ENCODE measurements at regions of chr3 and their contacts with region 1.

Region 1: DNA sequence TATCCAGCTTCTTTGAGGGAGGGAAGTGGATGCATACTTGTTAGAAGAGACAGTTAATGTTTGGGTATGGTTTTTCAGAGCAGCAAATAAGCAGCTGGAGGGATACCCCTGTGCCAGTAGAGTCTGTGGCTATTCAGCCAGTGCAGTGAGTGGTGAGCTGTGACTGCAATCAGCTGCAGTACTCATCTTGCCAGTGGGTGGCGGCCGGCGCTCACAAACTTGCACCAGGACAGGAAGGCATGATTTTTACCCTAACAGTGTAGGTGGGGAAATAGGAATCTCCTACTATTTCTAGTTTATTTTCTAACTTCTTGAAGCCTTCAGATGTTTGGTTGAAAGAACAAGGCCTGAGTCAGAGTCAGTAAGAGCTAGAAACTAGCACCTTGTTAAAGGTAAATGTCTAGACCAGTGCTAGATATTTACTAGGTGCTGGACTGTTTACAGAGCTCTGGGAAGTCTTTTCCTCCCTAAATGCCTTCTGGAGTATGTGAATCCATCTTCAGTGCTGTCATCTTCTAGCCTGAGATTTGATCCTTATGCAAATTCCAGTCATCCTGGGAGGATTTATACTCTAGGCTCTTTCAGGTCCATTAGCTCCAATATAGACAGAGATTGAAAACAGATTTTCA is 23.6 kb downstream of the TIMP4 start:
- DNase-seq: peak; percentile 57 to 63 (median 60)
- ATAC-seq: peak; percentile 97
- H3K4me3 ChIP-seq: no peak overlapping the region
- H3K27ac ChIP-seq: no peak overlapping the region
- H3K4me1 ChIP-seq: no peaks in the 10 kb centered on the region
- H3K27me3 ChIP-seq: no peaks in the 10 kb centered on the region
- CTCF ChIP-seq: peak; percentile 84 to 90 (median 88)
- EP300 ChIP-seq: no peak
- POLR2A ChIP-seq: no peak
- RAD21 ChIP-seq: peak; percentile 88 to 95

Region 2: DNA sequence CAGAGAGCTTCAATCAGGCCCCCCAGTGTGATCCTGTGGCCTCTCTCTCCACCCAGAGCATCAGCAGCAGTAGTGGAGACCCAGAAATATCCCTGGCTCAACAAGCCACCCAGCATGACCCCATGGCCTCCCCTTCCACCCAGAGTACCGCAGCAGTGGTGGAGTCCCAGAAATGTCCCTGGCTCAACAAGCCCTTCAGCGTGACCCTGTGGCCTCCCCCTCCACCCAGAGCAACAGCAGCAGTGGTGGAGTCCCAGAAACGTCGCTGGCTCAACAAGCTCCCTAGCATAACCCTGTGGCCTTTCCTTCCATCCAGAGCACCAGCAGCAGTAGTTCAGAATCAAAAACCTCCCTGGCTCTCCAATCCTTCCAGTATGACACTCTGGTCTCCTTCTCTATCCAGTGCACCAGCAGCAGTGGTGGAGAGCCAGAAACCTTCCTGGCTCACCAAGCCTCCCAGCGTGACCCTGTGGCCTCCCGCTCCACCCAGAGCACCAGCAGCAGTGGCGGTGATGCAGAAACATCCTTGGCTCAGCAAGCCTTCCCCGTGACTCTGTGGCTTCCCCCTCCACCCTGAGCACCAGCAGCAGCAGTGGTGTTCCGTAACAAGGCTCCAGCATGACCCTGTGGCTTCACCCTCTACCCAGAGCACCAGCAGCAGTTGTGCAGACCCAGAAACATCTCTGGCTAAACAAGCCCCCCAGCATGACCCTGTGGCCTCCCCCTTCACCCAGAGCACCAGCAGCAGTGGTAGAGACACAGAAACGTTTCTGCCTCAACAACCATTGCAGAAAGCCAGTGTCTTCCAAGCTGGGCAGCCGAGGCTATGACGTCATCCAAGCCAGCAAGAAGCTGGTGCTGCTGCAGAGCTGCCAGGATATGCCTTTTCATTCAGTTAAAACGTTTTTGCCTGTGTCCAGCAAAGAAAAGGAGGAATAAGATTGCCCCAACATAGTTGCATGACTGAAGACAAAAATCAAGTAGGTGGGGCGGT is 227.2 kb before region 1 on chr3:
- CTCF ChIA-PET with region 1: no interaction called
- POLR2A ChIA-PET with region 1: no interaction called
- in situ Hi-C with region 1: no loop called
- intact Hi-C with region 1: no loop called
- DNase-seq: no peak
- ATAC-seq: no peak
- H3K4me3 ChIP-seq: no peak overlapping the region
- H3K27ac ChIP-seq: no peak overlapping the region
- H3K4me1 ChIP-seq: no peaks in the 10 kb centered on the region; a peak in 1 of 5 replicates
- H3K27me3 ChIP-seq: peaks cover 14 to 82% of the 10 kb centered on the region in 2 experiments
- CTCF ChIP-seq: no peak
- EP300 ChIP-seq: no peak
- POLR2A ChIP-seq: no peak
- RAD21 ChIP-seq: no peak

Region 3: DNA sequence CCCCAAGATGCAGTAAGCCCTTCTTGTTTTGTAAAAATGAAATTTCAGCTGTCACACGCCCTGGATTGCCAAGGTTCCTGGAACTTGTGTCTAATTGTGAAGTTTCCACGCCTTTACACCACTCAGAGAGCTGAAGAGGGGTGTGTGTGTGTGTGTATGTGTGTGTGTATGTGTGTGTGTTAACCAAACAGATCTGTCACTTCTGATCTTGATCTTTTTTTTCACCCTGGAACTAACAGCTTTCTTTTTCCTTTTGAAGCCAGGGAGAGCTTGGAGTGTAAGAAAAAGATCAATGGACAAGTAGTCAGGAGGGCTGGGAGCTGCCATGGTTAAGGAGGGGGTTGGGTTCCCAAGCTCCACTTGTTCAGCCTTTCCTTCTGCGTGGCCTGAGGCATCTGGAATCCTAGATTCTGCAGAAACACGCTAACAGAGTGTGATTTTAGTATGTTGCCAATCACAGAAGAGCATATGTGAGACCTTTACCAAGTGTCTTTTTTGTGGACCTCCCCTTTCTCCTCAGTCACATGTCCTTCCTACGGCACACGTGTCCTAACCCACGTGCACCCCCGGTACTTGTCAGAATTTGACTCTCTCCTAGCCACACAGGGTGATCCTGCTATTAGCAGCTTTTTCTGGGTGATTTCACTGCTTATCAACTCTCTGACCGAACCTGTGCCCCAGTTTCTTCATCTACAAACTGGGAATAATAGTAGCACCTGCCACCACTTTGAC is 12.1 kb after region 1 on chr3:
- CTCF ChIA-PET with region 1: interaction called, 3 read pairs
- POLR2A ChIA-PET with region 1: interaction called, 10 read pairs
- in situ Hi-C with region 1: no loop called
- intact Hi-C with region 1: no loop called
- DNase-seq: no peak
- ATAC-seq: no peak
- H3K4me3 ChIP-seq: no peak overlapping the region
- H3K27ac ChIP-seq: no peak overlapping the region
- H3K4me1 ChIP-seq: no peaks in the 10 kb centered on the region
- H3K27me3 ChIP-seq: peaks cover 3 to 42% of the 10 kb centered on the region in 2 experiments; a peak in 3 of 5 replicates
- CTCF ChIP-seq: no peak
- EP300 ChIP-seq: no peak
- POLR2A ChIP-seq: no peak
- RAD21 ChIP-seq: no peak

Region 4: DNA sequence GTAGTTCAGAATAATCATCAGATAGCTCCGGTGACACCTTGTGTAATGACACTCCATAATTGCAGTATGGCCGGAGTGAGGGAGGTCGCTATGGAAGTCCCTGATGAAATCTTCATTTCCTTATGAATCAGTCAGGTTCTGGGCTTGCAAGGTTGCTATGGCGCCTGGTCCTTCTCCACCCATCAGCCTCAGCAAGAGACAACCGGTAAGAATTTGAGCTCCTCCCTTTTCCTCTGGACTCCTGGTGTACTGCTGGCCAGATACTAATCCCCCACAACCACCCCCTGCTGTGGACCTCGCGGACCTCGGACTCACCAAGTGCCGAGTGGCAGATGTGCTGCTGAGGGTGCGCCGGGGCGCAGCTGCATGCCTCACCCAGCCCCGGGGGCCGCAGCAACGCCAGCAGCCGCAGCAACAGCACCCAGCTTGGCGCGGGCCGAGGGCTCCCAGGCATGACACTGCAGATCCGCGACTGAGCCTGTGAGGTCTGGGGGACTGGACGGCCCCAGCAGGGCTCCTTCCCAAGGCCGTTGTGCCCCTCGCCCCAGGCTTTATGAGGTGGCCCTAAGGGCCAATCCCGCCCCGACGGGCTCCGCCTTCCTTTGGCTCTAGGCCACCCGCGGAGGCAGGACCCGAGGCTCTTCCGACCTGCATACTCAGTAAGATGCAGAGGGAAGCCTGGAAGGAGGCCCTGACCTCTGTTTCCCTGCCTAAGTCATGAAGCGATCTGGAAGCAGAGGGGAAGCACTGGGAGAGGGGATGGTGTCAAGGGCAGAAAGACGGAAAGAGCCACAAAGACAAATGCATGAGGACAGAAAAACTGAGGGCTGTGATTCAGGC is 23.5 kb after region 1 on chr3 and contains the start of gene TIMP4:
- CTCF ChIA-PET with region 1: no interaction called
- POLR2A ChIA-PET with region 1: no interaction called
- in situ Hi-C with region 1: no loop called
- intact Hi-C with region 1: no loop called
- DNase-seq: no peak
- ATAC-seq: peak; percentile 63
- H3K4me3 ChIP-seq: no peak within 1 kb of the TSS
- H3K27ac ChIP-seq: no peak within 1 kb of the TSS
- H3K4me1 ChIP-seq: peaks cover 4 to 6% of the 10 kb centered on the region in 2 experiments; a peak in 2 of 5 replicates
- H3K27me3 ChIP-seq: peaks cover 25 to 38% of the 10 kb centered on the region in 2 experiments; a peak in 4 of 5 replicates
- CTCF ChIP-seq: no peak
- EP300 ChIP-seq: no peak
- POLR2A ChIP-seq: no peak
- RAD21 ChIP-seq: no peak
- polyA plus RNA-seq, gene TIMP4: 0.03 TPM in 1 of 2 experiments, not detected in the other

Region 5: DNA sequence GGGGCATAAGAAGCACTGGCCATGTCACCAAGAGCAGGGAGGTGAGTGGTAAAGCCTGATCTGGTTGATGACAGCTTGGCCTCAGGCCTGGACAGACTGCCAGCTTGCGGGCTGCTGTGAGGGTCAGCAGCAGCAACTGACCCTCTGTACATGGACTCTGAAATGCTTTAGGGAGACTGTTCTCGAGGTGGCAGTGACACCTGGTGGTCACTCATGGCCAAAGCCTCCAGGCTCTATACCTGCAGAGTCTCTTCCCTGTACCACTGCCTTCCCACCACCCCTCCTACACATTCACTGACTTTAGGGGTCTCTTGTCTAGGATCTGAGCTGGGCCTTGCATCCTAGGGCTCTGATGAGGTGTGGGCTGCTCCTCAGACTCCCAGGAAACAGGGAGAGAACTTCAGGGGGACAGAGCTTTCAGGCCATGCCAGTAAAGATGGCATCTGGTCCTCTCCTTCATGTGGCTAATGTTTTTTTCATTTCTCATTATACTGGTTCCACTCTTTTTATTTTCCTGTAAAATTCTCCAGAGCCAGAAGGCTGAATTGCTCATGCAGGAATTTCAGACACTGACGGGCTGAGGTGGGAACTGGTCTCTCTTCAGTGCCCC is 40.8 kb after region 1 on chr3:
- CTCF ChIA-PET with region 1: interaction called, 27 read pairs
- POLR2A ChIA-PET with region 1: no interaction called
- in situ Hi-C with region 1: no loop called
- intact Hi-C with region 1: loop called (anchors 1 kb)
- DNase-seq: peak; percentile 67 to 72 (median 69)
- ATAC-seq: peak; percentile 98
- H3K4me3 ChIP-seq: no peak overlapping the region
- H3K27ac ChIP-seq: no peak overlapping the region
- H3K4me1 ChIP-seq: no peaks in the 10 kb centered on the region
- H3K27me3 ChIP-seq: peaks cover 0 to 4% of the 10 kb centered on the region in 2 experiments; a peak in 2 of 5 replicates
- CTCF ChIP-seq: peak; percentile 79 to 90 (median 90)
- EP300 ChIP-seq: no peak
- POLR2A ChIP-seq: no peak
- RAD21 ChIP-seq: peak; percentile 92 to 97

Region 6: DNA sequence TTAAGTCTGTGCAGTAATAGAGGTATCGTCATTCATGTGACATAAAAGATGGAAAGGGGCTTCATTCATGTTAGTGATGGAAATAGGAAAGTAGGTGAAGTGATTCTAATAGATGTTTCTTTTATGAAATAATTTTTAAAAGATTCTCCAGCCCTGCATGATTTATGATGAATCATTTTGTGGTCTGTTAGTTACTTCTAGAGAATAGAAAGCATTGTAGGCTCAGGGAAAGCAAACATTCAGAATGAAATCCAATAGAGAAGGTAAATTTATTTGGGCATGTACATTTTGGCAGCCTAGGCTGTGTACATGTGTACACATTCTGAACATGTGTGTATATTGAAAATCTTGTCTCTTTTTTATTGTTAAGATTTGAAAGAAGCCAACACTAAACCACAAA is 176.9 kb after region 1 on chr3:
- CTCF ChIA-PET with region 1: no interaction called
- POLR2A ChIA-PET with region 1: no interaction called
- in situ Hi-C with region 1: no loop called
- intact Hi-C with region 1: loop called (anchors 5 kb)
- DNase-seq: no peak
- ATAC-seq: no peak
- H3K4me3 ChIP-seq: no peak overlapping the region
- H3K27ac ChIP-seq: no peak overlapping the region
- H3K4me1 ChIP-seq: no peaks in the 10 kb centered on the region
- H3K27me3 ChIP-seq: peaks cover 5 to 14% of the 10 kb centered on the region in 2 experiments
- CTCF ChIP-seq: no peak
- EP300 ChIP-seq: no peak
- POLR2A ChIP-seq: no peak
- RAD21 ChIP-seq: no peak

Region 7: GRCh38 chr3:12484198-12484974 is 349.2 kb after region 1 on chr3 and contains the start of gene TSEN2:
- CTCF ChIA-PET with region 1: interaction called, 24 read pairs
- POLR2A ChIA-PET with region 1: interaction called, 4 read pairs
- in situ Hi-C with region 1: loop called (anchors 5 kb)
- intact Hi-C with region 1: loop called (anchors 1 kb)
- DNase-seq: peak; percentile 98 to 100 (median 100)
- ATAC-seq: peak; percentile 96
- H3K4me3 ChIP-seq: peak within 1 kb of the TSS; percentile 82
- H3K27ac ChIP-seq: peak within 1 kb of the TSS; percentile 84
- H3K4me1 ChIP-seq: peaks cover 19 to 22% of the 10 kb centered on the region in 2 experiments
- H3K27me3 ChIP-seq: peaks cover 0 to 5% of the 10 kb centered on the region in 2 experiments; a peak in 2 of 5 replicates
- CTCF ChIP-seq: peak; percentile 46 to 57 (median 55)
- EP300 ChIP-seq: peak; percentile 6; the same call in 1 of the 2 replicates
- POLR2A ChIP-seq: peak; percentile 94
- RAD21 ChIP-seq: peak in 1 of 2 experiments; percentile 62; a peak in 3 of 4 replicates
- polyA plus RNA-seq, gene TSEN2: 39.3 to 76.3 TPM